ENCODE measurements at regions of chr6 and their contacts with region 1.

Region 1: GRCh38 chr6:54980511-54981275 is 134.1 kb downstream of the FAM83B start:
- DNase-seq: peak; percentile 80
- ATAC-seq: peak; percentile 89
- H3K4me3 ChIP-seq: no peak overlapping the region
- H3K27ac ChIP-seq: peak overlapping the region; percentile 15; the same call in 1 of the 2 replicates
- H3K4me1 ChIP-seq: peaks cover 15% of the 10 kb centered on the region
- H3K27me3 ChIP-seq: no peaks in the 10 kb centered on the region
- CTCF ChIP-seq: no peak

Region 2: DNA sequence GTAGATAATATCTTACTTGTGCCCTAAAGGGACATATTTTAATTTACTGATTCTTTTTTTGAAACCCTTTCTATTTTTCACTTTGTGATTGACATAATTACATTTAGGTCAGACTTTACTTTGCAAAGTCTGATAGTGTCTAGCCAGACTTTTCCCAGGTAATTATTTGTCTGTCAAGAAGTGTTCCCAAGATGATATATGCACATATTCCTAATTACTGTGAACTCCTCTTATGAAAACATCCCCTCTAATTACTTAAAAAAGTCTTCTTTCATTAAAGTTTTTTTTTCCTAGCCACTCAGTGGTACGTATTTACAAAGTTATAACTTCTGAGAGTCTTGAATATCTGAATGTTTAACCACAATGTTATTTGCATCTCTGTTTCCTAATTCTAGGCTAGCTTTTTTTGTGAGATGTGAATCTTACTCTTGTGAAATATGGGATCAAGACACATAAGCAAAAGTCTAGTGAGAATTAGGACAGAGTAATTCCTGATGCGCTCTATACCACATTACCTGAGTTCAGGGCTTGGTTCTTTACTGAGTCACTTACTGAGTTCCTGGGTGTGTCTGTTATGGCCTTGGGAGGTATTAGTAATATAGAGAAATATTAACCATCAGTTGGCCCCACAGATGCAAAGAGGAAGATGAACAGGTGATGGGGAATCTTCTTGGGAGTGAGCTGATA is 106.2 kb before region 1 on chr6:
- CTCF ChIA-PET with region 1: no interaction called
- POLR2A ChIA-PET with region 1: no interaction called
- intact Hi-C with region 1: no loop called
- DNase-seq: peak; percentile 92
- ATAC-seq: peak; percentile 98
- H3K4me3 ChIP-seq: peak overlapping the region; percentile 18; the same call in 1 of the 2 replicates
- H3K27ac ChIP-seq: peak overlapping the region; percentile 90
- H3K4me1 ChIP-seq: peaks cover 33% of the 10 kb centered on the region
- H3K27me3 ChIP-seq: no peaks in the 10 kb centered on the region
- CTCF ChIP-seq: no peak

Region 3: DNA sequence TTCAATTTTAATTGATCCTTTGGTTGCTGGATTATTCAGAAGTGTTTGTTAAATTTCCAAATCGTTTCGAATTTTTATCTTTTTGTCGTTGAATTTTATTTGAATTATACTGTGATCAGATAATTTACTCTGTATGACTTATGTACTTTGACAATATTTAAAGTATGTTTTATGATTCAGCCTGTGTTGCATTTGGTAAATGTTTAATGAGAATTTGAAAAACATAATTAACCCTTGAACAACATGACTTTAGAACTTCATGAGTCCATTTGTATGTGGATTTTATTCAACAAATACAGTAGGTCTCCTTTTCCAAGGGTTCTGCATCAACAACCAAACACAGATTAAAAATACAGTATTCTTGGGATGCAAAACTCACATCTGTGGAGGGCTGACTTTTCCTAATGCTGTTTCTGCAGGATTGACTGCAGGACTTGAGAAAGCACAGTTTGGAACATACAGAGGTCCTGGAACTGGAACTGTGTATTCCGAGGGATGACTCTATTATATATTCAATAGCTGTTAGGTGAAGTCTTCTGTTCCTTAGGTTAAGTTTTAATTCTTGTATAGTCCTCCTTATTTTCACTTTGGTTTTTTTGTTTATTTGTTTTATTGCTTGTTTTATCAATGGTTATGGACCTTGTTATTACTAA is 93.6 kb before region 1 on chr6:
- CTCF ChIA-PET with region 1: no interaction called
- POLR2A ChIA-PET with region 1: no interaction called
- intact Hi-C with region 1: loop called (anchors 10 kb)
- DNase-seq: no peak
- ATAC-seq: no peak
- H3K4me3 ChIP-seq: no peak overlapping the region
- H3K27ac ChIP-seq: no peak overlapping the region
- H3K4me1 ChIP-seq: peaks cover 16% of the 10 kb centered on the region
- H3K27me3 ChIP-seq: no peaks in the 10 kb centered on the region
- CTCF ChIP-seq: no peak

Region 4: GRCh38 chr6:54937371-54937770 is 43.3 kb before region 1 on chr6:
- CTCF ChIA-PET with region 1: no interaction called
- POLR2A ChIA-PET with region 1: no interaction called
- intact Hi-C with region 1: no loop called
- DNase-seq: no peak
- ATAC-seq: no peak
- H3K4me3 ChIP-seq: no peak overlapping the region
- H3K27ac ChIP-seq: no peak overlapping the region
- H3K4me1 ChIP-seq: peaks cover 18% of the 10 kb centered on the region
- H3K27me3 ChIP-seq: no peaks in the 10 kb centered on the region
- CTCF ChIP-seq: no peak

Region 5: GRCh38 chr6:55040102-55040848 is 59.6 kb after region 1 on chr6:
- CTCF ChIA-PET with region 1: no interaction called
- POLR2A ChIA-PET with region 1: no interaction called
- intact Hi-C with region 1: loop called (anchors 5 kb)
- DNase-seq: peak; percentile 92
- ATAC-seq: peak; percentile 94
- H3K4me3 ChIP-seq: peak overlapping the region; percentile 30
- H3K27ac ChIP-seq: peak overlapping the region; percentile 84
- H3K4me1 ChIP-seq: peaks cover 31% of the 10 kb centered on the region
- H3K27me3 ChIP-seq: no peaks in the 10 kb centered on the region
- CTCF ChIP-seq: no peak

Measured in PC-3 (cell line).